ENCODE measurements at regions of chr6 and their contacts with region 1.

Region 1: DNA sequence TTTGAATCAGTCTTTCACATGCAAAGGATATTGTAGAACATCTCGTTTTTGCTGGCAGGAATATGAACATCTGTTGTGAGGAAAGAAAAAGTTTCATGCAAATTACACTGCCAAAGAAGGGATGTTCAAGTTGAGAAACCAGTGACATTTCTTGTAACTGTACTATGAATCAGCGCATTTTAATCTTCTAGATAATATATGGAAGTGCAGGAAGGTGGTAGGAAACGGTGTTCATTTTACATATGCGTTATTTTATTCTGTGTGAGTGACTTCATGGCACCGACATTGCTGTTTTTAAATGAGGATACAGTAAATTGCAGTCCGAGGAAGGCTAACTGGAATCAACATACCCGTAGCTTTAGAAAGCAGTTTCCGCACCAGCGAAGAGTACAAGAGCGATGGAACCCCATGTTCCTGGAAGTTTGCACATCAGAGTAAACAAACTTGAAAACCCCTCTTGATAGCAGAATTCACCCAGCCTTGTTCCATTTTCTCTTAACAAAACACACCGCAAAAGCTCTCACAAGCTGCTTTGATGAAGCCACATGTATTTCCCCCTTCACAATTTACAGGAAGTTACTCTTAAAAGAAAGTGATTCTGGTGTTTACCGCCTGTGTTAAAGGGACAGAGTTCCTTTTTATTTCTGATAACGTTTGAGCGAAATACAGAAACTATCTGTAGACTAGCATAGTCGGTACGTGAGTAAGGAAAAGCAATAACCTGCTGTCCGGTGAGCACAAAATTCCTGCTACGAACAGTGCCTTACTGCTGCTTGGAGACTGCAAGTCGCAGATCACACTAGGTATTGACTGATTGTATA is 11.5 kb downstream of the PRDM1 start:
- DNase-seq: peak; percentile 46
- CTCF ChIP-seq: no peak

Region 2: GRCh38 chr6:105824732-105825131 is 272.9 kb before region 1 on chr6:
- in situ Hi-C with region 1: no loop called
- DNase-seq: peak; percentile 39
- CTCF ChIP-seq: no peak

Region 3: DNA sequence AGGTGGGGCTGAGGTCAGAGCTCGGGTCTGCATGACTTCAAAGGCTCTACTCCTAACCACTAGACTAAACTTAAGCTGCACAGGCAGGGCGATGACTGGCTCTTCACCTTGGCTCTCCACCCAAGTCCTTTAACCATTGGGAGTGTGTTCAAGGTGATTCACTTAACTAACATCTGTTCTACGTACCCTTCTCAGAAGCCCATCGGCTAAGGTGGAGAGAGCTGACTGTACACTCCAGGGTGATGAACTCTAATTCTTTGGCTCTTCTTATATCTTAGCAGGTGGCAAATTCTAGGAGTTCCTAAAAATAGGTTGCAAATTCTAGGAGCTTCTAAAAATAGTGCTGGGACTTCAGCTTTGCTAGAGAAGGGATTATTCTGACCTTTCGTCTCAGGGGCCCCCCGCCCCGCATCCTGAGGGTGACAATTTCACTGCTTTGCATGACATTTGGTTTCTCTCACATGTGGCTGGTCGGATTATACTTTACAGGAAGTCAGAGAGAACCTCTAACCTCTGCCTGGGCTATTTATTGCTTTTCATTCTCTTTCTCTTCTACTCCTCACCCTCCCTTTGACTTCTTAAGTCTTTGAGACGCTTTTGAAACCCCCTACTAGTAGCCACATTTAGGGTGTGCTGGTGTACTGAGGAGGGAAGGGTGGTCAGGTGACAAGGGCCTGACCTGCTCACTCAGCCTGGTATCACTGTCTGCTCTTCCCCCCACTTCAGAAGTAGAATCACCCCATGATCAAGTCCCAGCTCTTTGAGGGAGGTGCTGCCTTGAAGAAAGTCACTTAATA is 44.0 kb after region 1 on chr6:
- in situ Hi-C with region 1: no loop called
- DNase-seq: peak; percentile 63
- CTCF ChIP-seq: no peak

Region 4: DNA sequence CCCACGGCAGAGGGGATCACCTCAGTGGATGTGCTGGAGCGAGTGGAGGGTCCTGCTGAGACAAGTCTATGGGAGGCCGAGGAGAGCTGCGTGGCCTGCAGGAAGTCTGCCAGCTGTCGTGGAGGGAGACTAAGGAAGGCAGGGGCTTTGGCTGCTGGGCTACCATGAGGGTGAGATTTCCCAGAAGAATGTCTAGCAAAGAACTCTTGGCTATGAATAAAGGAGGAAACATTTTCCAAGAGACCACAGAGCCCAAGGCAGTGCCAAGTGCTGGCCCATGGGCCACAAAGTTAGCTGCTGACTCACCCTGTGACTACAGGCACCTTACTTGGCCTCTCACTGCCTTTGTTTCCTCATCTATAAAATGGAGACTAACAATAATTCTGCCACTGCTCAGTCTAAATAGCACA is 61.9 kb after region 1 on chr6:
- in situ Hi-C with region 1: no loop called
- DNase-seq: no peak
- CTCF ChIP-seq: no peak

Region 5: GRCh38 chr6:106181664-106182418 is 84.2 kb after region 1 on chr6:
- in situ Hi-C with region 1: loop called (anchors 10 kb)
- DNase-seq: no peak
- CTCF ChIP-seq: no peak

Region 6: DNA sequence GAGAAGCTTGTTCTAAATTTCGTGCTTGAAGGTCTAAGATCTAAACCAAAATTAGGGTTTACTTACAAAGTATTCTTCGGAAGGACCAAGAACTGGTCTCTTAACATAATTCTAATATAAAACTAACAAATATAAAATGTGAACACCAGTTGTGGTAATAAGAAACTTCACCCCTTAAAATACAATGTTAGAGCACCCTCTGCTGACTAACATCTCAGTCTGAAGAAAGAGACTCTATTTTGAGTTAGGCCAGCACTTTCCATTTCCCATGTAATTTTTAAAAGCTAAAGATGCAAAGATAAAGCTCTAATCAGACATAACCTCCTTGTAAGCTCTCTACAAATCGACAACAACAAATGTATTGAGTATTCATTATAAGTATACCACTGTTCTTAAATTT is 203.3 kb after region 1 on chr6:
- in situ Hi-C with region 1: loop called (anchors 10 kb)
- DNase-seq: peak; percentile 25
- CTCF ChIP-seq: peak; percentile 54

Measured in GM13977 (cell line).